Activated T-helper 1 cell treated with anti-CD3 and anti-CD28 coated beads, Interleukin-12 subunit alpha, Interleukin-12 subunit beta, Interleukin-2, Interleukin-4 antibody, amounts not matched to agents 30 ng/mL and 10 ng/mL and 1 ng/mL, durations not matched to agents 14 hours and 24 hours and 36 hours (primary cell): ENCODE measurements at regions of chr18 and their contacts with region 1.

Region 1: GRCh38 chr18:3604498-3605408 is 154.8 kb downstream of the TGIF1 start:
- DNase-seq: peak; percentile 38
- H3K4me3 Mint-ChIP-seq: no peak overlapping the region
- H3K27ac Mint-ChIP-seq: no peak overlapping the region
- H3K4me1 Mint-ChIP-seq: peaks cover 19% of the 10 kb centered on the region
- H3K27me3 Mint-ChIP-seq: no peaks in the 10 kb centered on the region

Region 2: GRCh38 chr18:3012964-3013804 is 591.6 kb before region 1 on chr18 and contains the start of gene LPIN2:
- intact Hi-C with region 1: no loop called
- DNase-seq: peak; percentile 95
- H3K4me3 Mint-ChIP-seq: peak within 1 kb of the TSS; percentile 92
- H3K27ac Mint-ChIP-seq: peak within 1 kb of the TSS; percentile 90
- H3K4me1 Mint-ChIP-seq: peaks cover 65% of the 10 kb centered on the region
- H3K27me3 Mint-ChIP-seq: no peaks in the 10 kb centered on the region
- total RNA-seq, gene LPIN2: 86.6 and 91.8 TPM in 2 replicates

Region 3: GRCh38 chr18:3645384-3646156 is 40.8 kb after region 1 on chr18:
- intact Hi-C with region 1: loop called (anchors 2 kb)
- DNase-seq: no peak
- H3K4me3 Mint-ChIP-seq: no peak overlapping the region
- H3K27ac Mint-ChIP-seq: no peak overlapping the region
- H3K4me1 Mint-ChIP-seq: peaks cover 49% of the 10 kb centered on the region
- H3K27me3 Mint-ChIP-seq: no peaks in the 10 kb centered on the region

Region 4: DNA sequence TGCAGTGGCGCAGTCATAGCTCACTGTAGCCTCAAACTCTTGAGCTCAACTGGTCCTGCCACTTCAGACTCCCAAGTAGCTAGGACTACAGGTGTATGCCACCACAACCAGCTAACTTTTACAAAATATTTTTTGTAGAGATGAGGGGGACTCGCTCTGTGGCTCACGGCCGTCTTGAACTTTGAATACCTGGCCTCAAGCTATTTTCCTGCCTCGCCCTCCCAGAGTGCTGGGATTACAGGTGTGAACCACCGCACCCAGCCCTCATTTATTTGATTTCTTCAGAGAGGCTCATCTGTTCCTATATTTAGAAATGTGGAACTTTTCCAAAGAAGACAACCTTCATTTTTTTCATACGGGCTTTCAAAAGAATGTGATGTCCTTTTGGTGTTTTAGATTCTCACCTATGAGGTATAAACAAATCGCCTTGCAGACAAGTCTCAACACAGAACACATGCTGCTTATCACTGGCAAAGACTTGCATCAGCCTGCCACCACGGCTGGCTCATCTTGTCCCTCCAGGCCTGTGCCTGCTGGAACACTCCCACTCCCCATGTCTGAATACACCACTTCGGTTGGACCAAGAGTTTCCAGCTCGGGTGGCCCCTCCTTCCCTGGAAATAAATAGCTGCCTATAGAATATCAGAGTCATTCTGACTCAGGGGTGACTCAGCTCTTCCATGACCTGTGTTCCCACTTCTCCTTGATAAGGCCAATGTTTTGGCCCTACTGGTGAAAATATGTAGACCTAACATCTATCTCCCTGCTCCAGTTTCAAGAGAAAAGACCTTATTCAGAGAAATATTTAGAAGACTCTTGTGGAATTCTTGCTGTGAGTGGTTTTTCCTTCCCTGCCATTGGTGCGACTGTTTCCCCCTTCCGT is 47.9 kb after region 1 on chr18:
- intact Hi-C with region 1: loop called (anchors 1 kb)
- DNase-seq: peak; percentile 12
- H3K4me3 Mint-ChIP-seq: peak overlapping the region; percentile 51
- H3K27ac Mint-ChIP-seq: peak overlapping the region; percentile 90
- H3K4me1 Mint-ChIP-seq: peaks cover 54% of the 10 kb centered on the region
- H3K27me3 Mint-ChIP-seq: peaks cover 2% of the 10 kb centered on the region